Right cardiac atrium (tissue), 5 donors: ENCODE measurements at regions of chr1 and their contacts with region 1.

Region 1: DNA sequence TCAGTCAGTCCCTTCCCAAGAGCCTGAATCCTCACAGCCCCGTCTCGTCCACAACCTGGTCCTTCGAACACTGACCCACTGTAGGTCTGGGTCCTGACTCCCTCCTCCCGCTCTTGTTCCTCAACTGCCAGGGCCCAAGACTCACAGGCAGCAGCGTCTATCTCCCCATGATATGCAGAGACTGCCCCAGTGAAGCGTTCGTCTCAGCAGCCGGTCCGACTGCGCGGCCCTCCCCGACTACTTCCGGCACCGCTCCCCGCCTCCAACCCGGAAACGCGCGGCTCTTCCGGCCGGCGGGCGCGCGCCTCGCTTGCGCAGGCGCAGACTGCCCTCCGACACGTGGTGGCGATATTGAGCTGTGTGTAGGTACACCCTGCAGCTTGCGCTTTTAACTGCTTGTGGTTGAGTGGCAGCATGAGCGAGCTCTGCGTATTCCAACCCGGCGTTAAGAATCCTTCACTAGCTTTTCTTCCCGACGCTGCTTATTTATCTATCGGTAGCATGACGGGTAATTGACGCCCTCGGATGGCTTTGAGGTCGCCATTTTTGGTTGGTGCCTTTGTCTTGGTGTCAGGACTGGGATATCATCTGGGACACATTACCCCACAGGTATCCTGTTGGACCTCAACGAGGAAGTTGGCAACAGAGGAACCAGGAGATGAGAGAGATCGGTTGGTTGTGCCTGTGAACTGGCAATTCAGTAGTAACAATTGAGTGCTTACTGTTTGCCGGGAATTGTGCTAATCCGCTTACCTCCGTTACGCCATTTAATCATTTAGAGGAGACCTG is at the start of gene TAF12:
- DNase-seq: peak; percentile 91 to 97 (median 97)
- ATAC-seq: peak; percentile 96
- H3K4me3 ChIP-seq: peak within 1 kb of the TSS; percentile 72
- H3K27ac ChIP-seq: peak within 1 kb of the TSS; percentile 89
- H3K4me1 ChIP-seq: no peaks in the 10 kb centered on the region
- H3K27me3 ChIP-seq: no peaks in the 10 kb centered on the region
- total RNA-seq, gene TAF12: 17.2 to 23.7 (median 21.9) TPM

Region 2: DNA sequence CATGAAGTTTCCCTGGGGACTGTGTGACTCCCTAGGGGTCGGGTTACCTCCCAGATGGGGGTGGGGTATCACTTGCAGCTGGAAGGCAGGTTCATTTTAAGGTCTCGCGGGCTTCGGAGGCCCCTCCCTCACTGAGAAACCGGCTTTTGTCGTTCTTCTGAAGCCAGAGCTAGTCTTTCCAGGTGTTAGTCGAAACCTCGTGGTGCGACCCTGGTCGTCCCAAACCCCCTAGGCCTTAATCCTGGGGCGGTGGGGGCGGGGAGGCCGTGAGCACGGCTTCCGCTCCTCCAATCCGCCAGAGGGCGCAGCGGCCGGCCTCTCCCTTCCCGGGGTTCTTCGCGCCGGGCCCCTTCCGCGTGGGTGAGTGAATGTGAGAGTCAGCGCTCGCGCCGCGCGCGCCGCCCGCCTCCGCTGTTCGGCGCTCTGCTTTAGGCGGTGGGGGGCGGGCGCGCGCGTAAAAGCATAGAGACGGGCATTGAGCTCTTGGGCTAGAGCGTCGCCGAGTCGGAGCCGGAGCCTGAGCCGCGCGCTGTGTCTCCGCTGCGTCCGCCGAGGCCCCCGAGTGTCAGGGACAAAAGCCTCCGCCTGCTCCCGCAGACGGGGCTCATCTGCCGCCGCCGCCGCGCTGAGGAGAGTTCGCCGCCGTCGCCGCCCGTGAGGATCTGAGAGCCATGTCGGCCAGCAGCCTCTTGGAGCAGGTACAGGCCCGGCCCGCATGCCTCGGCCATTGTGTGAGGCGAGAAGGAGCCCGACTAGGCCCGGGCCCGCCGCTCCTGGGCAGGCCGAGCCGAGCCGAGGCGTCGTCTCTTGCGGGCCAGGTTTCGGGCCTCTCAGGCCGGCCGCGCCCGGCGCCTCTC is 93.6 kb after region 1 on chr1 and contains the start of gene YTHDF2:
- intact Hi-C with region 1: loop called in 2 of 4 experiments (anchors 5 kb)
- DNase-seq: peak; percentile 98 to 99 (median 99)
- ATAC-seq: peak; percentile 99
- H3K4me3 ChIP-seq: peak within 1 kb of the TSS; percentile 92
- H3K27ac ChIP-seq: peak within 1 kb of the TSS; percentile 96
- H3K4me1 ChIP-seq: no peaks in the 10 kb centered on the region
- H3K27me3 ChIP-seq: no peaks in the 10 kb centered on the region
- total RNA-seq, gene YTHDF2: 34.0 to 43.3 (median 36.1) TPM

Region 3: DNA sequence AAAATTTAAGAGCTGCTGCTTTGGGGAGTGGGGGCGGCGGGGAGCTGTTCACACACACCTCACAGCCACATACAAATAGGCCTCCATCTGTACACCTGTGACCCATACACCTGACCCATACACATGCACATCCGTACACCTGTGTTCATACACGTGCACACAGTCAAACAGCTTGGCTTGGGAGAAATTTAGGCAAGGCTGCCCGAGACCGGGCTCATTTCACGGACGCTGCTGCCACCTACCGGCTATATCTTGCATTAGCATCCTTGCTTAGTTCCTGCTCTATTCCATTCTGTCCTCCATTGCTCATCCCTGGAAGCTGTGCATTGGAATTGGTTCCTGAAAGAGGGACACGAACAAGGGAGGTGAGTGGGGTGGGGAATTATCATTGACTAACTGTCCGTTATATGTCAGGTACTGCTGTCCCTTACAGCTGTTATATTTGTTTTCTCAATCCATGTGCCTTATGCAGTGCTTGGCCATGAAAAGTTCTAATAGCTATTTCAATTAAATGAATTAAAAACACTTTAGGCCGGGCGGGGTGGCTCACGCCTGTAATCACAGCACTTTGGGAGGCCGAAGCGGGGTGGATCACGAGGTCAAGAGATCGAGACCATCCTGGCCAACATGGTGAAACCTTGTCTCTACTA is 234.2 kb after region 1 on chr1:
- intact Hi-C with region 1: no loop called
- DNase-seq: peak; percentile 71 to 84 (median 81)
- ATAC-seq: peak; percentile 78 to 83
- H3K4me3 ChIP-seq: no peak overlapping the region
- H3K27ac ChIP-seq: no peak overlapping the region
- H3K4me1 ChIP-seq: no peaks in the 10 kb centered on the region
- H3K27me3 ChIP-seq: no peaks in the 10 kb centered on the region

Region 4: DNA sequence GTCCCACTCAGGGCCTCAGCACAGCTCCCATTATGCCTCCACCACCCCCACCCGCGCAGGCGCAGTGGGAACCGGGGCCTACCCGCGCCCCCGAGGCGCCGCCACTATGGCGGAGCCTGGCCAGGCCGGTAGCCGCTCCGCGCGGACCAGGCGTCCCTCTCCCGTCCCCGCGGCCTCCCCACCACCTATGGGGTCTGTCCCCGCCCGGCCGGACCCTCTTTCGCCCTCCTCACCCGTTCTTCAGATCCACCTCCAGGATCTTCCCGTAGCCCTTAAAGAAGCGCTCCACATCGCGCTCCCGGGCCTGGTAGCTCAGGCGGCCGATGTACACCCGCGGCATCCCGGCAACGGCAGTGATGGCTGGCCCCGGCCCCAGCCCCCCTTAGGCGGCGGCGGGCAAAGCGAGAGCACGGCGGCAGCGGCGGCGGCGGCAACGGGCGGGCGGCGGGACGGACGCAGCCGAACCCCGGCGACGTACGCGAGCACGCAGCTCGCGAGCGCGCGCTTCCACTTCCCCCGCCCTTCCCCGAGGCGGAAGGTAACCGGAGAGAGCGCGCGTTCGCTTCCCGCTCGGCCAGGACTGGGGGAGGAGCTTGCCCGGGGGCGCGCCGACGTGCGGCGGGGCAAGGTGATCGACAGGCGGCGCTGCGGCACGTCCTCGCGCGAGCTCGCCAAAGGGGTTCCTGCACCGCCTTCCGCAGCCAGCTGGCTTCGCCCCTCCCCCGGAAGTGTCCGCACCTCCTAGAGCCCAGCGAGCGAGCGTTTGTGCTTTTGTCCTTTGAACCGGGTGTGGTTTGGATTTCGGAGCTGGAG is 538.6 kb after region 1 on chr1 and contains the start of gene SRSF4:
- intact Hi-C with region 1: loop called in 1 of 4 experiments (anchors 10 kb)
- DNase-seq: peak; percentile 100
- ATAC-seq: peak; percentile 95 to 97
- H3K4me3 ChIP-seq: peak within 1 kb of the TSS; percentile 80
- H3K27ac ChIP-seq: peak within 1 kb of the TSS; percentile 100
- H3K4me1 ChIP-seq: peaks cover 3% of the 10 kb centered on the region
- H3K27me3 ChIP-seq: no peaks in the 10 kb centered on the region
- total RNA-seq, gene SRSF4: 52.0 to 63.7 (median 61.1) TPM